ENCODE measurements at regions of chr5 and their contacts with region 1.

Region 1: GRCh38 chr5:10145923-10146401 is 103.7 kb downstream of the ATPSCKMT start:
- DNase-seq: peak; percentile 9
- H3K4me3 ChIP-seq: no peak overlapping the region
- CTCF ChIP-seq: no peak

Region 2: DNA sequence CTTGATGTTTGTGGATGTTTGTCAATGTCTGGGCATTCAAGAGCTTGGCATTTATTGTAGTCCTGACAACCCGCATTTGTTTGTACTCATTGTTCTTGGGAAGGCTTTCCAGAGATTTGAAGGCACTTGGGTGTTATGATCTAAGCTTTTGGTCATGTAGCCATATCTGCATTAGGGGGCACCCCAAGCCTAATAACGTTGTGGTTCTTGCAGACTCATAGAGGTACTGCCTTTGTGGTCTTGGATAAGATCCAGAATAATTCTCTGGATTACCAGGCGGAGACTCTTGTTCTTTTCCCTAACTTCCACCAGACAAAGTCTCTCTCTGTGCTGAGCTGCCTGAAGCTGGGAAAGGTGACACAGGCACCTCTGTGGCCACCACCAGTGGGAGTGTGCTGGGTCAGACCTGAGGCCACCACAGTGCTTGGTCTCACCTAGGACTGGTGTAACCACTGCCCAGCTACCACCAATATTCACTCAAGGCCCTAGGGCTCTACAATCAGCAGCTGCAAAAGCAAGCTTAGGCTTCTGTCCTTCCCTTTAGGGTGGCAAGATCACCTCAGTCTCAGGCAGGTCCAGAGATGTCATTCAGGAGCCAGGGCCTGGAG is 371.4 kb before region 1 on chr5:
- CTCF ChIA-PET with region 1: interaction called, 41 read pairs
- POLR2A ChIA-PET with region 1: no interaction called
- DNase-seq: no peak
- H3K4me3 ChIP-seq: no peak overlapping the region
- CTCF ChIP-seq: peak; percentile 32

Region 3: GRCh38 chr5:10157085-10157669 is 11.2 kb after region 1 on chr5:
- CTCF ChIA-PET with region 1: interaction called, 14 read pairs
- POLR2A ChIA-PET with region 1: no interaction called
- DNase-seq: no peak
- H3K4me3 ChIP-seq: no peak overlapping the region
- CTCF ChIP-seq: no peak

Region 4: GRCh38 chr5:10162468-10162867 is 16.5 kb after region 1 on chr5:
- CTCF ChIA-PET with region 1: interaction called, 13 read pairs
- POLR2A ChIA-PET with region 1: no interaction called
- DNase-seq: no peak
- H3K4me3 ChIP-seq: no peak overlapping the region
- CTCF ChIP-seq: no peak

Region 5: GRCh38 chr5:10374046-10375022 is 228.4 kb after region 1 on chr5:
- CTCF ChIA-PET with region 1: no interaction called
- POLR2A ChIA-PET with region 1: no interaction called
- DNase-seq: no peak
- H3K4me3 ChIP-seq: no peak overlapping the region
- CTCF ChIP-seq: no peak